Activated CD4-positive, alpha-beta memory T cell treated with anti-CD3 and anti-CD28 coated beads for 36 hours (primary cell): ENCODE measurements at regions of chr22 and their contacts with region 1.

Region 1: GRCh38 chr22:26665813-26666231 is 8.4 kb downstream of the MIAT start:
- DNase-seq: no peak
- H3K4me3 Mint-ChIP-seq: peak overlapping the region; percentile 43
- H3K27ac Mint-ChIP-seq: peak overlapping the region; percentile 92
- H3K4me1 Mint-ChIP-seq: peaks cover 62% of the 10 kb centered on the region
- H3K27me3 Mint-ChIP-seq: no peaks in the 10 kb centered on the region

Region 2: GRCh38 chr22:26502688-26503561 is 162.9 kb before region 1 on chr22:
- CTCF ChIA-PET with region 1: interaction called, 46 read pairs
- POLR2A ChIA-PET with region 1: no interaction called
- intact Hi-C with region 1: loop called (anchors 5 kb)
- DNase-seq: peak; percentile 75
- H3K4me3 Mint-ChIP-seq: no peak overlapping the region
- H3K27ac Mint-ChIP-seq: peak overlapping the region; percentile 87
- H3K4me1 Mint-ChIP-seq: peaks cover 20% of the 10 kb centered on the region
- H3K27me3 Mint-ChIP-seq: no peaks in the 10 kb centered on the region

Region 3: DNA sequence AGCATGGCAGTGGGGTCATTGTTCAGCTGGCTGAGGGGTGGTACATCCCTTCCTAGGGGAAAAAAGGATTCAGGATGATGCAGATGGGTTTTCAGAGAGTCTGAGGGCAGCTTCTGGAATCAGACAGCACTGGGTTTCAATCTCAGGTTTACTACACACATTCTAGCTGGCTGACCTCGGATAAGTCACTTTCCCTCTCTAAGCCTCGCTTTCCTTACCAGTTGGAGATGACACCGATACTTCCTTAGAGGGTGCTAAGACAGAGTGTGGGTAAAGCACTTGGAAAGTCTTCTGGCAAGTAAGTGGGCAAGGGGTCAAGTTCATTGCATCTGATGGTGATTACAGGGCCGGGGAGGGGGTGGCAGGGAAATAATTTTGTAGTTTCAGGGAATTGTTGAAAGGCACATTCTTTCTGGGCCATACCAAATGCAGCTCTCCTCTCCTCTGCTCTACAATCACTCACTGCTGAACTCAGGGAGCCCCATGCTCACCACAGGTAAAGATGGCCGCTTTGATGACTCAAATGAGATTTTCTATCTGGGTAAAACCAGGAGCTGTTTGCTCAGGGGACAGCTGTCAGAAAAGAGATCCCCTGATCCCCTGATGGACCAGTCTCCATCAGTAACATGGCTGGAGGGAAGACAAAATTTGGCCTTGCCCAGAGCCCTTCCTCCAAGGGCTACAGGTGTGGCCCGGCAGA is 14.9 kb before region 1 on chr22:
- CTCF ChIA-PET with region 1: interaction called, 10 read pairs
- POLR2A ChIA-PET with region 1: no interaction called
- intact Hi-C with region 1: no loop called
- DNase-seq: peak; percentile 62
- H3K4me3 Mint-ChIP-seq: no peak overlapping the region
- H3K27ac Mint-ChIP-seq: peak overlapping the region; percentile 48
- H3K4me1 Mint-ChIP-seq: peaks cover 52% of the 10 kb centered on the region
- H3K27me3 Mint-ChIP-seq: no peaks in the 10 kb centered on the region

Region 4: GRCh38 chr22:26995235-26995634 is 329.4 kb after region 1 on chr22:
- CTCF ChIA-PET with region 1: no interaction called
- POLR2A ChIA-PET with region 1: no interaction called
- intact Hi-C with region 1: no loop called
- DNase-seq: no peak
- H3K4me3 Mint-ChIP-seq: no peak overlapping the region
- H3K27ac Mint-ChIP-seq: no peak overlapping the region
- H3K4me1 Mint-ChIP-seq: no peaks in the 10 kb centered on the region
- H3K27me3 Mint-ChIP-seq: no peaks in the 10 kb centered on the region